ENCODE measurements at regions of chr12 and their contacts with region 1.

Region 1: DNA sequence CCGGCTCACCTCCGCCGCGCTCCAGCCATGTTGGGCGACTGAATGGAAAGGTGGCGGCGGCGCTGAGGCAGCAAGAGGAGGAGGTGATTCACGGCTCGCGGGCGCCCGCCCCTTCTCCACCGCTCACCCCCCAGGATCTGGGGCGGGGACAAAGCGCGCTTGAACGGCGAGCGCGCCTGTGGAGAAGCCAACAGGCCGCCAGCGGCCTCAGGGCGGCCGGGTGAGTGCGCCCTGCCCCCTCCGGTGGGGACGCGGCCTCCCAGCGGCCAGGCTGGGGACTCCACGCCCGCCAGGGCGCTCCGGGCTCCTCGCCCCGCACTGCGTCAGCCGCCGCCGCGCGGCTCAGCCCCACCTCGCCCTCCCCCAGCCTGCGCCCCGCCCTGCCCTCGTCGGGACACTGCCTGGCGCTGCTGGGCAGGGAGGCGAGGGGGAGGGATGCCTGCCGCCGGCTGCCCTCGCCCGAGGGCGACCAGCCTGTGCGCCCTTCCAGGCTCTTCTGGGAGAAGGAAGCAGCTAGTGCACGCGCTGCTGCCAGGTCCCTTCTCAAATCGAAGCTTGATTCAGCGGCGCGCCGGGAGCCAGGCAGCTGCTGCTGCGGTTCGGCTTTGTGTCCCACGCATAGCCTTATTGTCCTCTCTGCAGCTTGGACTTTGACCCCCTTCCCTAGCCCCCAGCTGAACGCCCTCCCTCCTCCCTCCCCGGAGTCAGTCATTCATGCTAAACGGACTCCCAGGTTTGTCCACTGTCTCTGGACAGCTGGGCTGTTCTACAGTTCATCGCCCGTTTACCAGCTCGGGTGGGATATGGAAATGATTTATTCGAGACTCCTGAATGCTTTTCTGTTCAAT is at the start of gene KIF21A:
- DNase-seq: peak; percentile 74 to 91 (median 86)
- H3K4me3 ChIP-seq: peak within 1 kb of the TSS; percentile 81
- H3K27ac ChIP-seq: peak within 1 kb of the TSS; percentile 50 to 68
- H3K4me1 ChIP-seq: peaks cover 2% of the 10 kb centered on the region
- H3K27me3 ChIP-seq: no peaks in the 10 kb centered on the region
- CTCF ChIP-seq: peak; percentile 58 to 77 (median 63)
- EP300 ChIP-seq: no peak
- POLR2A ChIP-seq: peak; percentile 48
- total RNA-seq, gene KIF21A: 5.4 to 43.3 (median 11.8) TPM

Region 2: GRCh38 chr12:39102474-39103209 is 340.7 kb before region 1 on chr12:
- intact Hi-C with region 1: no loop called
- DNase-seq: no peak
- H3K4me3 ChIP-seq: no peak overlapping the region
- H3K27ac ChIP-seq: no peak overlapping the region
- H3K4me1 ChIP-seq: no peaks in the 10 kb centered on the region
- H3K27me3 ChIP-seq: no peaks in the 10 kb centered on the region
- CTCF ChIP-seq: no peak
- EP300 ChIP-seq: no peak
- POLR2A ChIP-seq: no peak

Region 3: GRCh38 chr12:39413836-39414771 is 29.2 kb before region 1 on chr12:
- intact Hi-C with region 1: no loop called
- DNase-seq: no peak
- H3K4me3 ChIP-seq: no peak overlapping the region
- H3K27ac ChIP-seq: no peak overlapping the region
- H3K4me1 ChIP-seq: no peaks in the 10 kb centered on the region
- H3K27me3 ChIP-seq: no peaks in the 10 kb centered on the region
- CTCF ChIP-seq: no peak
- EP300 ChIP-seq: no peak
- POLR2A ChIP-seq: no peak

Region 4: DNA sequence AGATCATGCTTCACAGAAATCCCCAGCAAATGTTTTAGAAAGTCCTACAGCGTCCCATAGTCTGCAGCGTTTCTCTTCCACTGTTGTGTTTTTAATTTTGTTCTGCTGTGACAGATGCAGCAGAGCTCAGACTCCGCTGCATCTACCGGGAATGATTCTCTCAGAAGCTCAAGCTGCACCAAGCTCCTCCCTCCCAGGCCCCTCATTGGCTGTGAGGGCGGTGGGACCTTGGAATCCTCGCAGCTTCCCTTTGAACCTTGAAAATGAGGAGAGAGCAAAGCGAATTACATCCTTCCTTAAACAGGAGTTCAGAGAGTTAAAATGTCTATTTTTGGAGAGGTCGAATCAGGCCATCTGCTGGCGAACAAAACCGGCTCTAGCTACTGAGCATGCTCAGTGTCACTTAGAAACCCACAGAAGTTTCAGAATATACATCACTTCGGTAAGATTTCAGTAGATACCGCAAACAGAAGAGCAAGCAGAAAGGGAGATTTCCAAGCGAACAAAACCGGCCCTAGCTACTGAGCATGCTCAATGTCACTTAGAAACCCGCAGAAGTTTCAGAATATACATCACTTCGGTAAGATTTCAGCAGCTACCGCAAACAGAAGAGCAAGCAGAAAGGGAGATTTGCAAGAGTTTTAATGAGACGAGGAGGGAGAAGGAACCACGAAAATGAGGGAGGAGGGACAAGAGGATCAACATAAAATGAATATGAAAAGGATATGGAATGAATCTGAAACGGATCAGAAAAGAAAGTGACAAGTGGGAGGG is 176.5 kb after region 1 on chr12 and contains the start of gene ABCD2:
- intact Hi-C with region 1: loop called in 1 of 4 experiments (anchors 5 kb)
- DNase-seq: peak; percentile 32 to 65 (median 55)
- H3K4me3 ChIP-seq: peak within 1 kb of the TSS; percentile 31
- H3K27ac ChIP-seq: peak within 1 kb of the TSS in 1 of 2 donors; percentile 16
- H3K4me1 ChIP-seq: no peaks in the 10 kb centered on the region
- H3K27me3 ChIP-seq: no peaks in the 10 kb centered on the region
- CTCF ChIP-seq: no peak
- EP300 ChIP-seq: no peak
- POLR2A ChIP-seq: no peak
- total RNA-seq, gene ABCD2: 0.08 to 0.57 (median 0.13) TPM

Measured in ovary (tissue), 10 donors.